Head of caudate nucleus (tissue), 42 donors: ENCODE measurements at regions of chr2 and their contacts with region 1.

Region 1: GRCh38 chr2:19911799-19912509 is 10.2 kb upstream of the TTC32 start:
- DNase-seq: no peak

Region 2: GRCh38 chr2:19733931-19734425 is 178.0 kb before region 1 on chr2:
- intact Hi-C with region 1: no loop called
- DNase-seq: peak in 1 of 42 donors; percentile 29

Region 3: GRCh38 chr2:19863303-19864041 is 48.5 kb before region 1 on chr2:
- intact Hi-C with region 1: no loop called
- DNase-seq: peak; percentile 27 to 92 (median 80)

Region 4: GRCh38 chr2:19971691-19972090 is 59.7 kb after region 1 on chr2:
- intact Hi-C with region 1: loop called (anchors 10 kb)
- DNase-seq: no peak